ENCODE measurements at regions of chr6 and their contacts with region 1.

Region 1: GRCh38 chr6:90216072-90216977 is 80.3 kb downstream of the BACH2 start:
- DNase-seq: no peak
- H3K4me3 ChIP-seq: no peak overlapping the region
- H3K27ac ChIP-seq: no peak overlapping the region
- H3K27me3 ChIP-seq: no peaks in the 10 kb centered on the region
- CTCF ChIP-seq: no peak

Region 2: GRCh38 chr6:89797317-89797716 is 419.0 kb before region 1 on chr6:
- CTCF ChIA-PET with region 1: no interaction called
- POLR2A ChIA-PET with region 1: no interaction called
- DNase-seq: peak; percentile 27
- H3K4me3 ChIP-seq: no peak overlapping the region
- H3K27ac ChIP-seq: no peak overlapping the region
- H3K27me3 ChIP-seq: no peaks in the 10 kb centered on the region
- CTCF ChIP-seq: no peak

Region 3: GRCh38 chr6:89984926-89985750 is 231.2 kb before region 1 on chr6:
- CTCF ChIA-PET with region 1: no interaction called
- POLR2A ChIA-PET with region 1: interaction called, 47 read pairs
- DNase-seq: no peak
- H3K4me3 ChIP-seq: no peak overlapping the region
- H3K27ac ChIP-seq: peak overlapping the region; percentile 94
- H3K27me3 ChIP-seq: no peaks in the 10 kb centered on the region
- CTCF ChIP-seq: no peak

Region 4: DNA sequence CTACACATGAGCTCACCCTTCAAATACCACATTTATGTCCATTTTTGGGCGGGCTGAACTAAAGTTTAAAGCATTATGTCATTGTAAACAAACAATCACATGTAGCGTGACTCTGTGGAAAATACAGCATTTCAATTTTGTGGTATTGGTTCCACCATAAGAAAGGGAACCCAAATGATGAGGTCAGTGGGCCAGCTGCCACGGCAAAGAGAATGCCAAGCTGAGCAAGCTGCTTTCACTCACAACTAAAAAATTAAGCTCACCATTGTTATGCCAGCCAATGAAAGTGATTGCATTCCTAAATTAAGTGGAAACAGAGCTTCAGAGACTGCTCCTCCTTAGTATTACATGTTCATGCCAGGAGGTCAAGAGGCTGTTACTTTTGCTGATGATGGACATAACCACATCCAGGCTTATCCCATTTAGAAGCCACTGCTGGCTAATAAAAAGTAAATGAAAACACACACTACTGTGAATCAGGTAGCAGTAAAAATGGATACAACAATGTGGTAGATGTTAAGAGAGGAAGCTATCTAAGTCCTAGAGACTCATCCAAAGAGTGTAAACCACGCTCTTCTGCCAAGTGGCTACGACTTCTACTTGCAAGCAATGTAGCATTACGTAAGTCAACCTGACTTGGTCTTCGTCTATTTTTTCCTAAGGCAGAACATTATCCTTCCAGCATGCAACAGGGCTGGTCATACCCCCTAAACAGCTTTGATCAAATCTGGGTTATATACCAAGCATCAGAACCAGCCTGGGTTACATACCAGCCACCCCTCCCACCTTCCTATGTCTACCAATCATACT is 84.5 kb before region 1 on chr6:
- CTCF ChIA-PET with region 1: no interaction called
- POLR2A ChIA-PET with region 1: interaction called, 16 read pairs
- DNase-seq: peak; percentile 59
- H3K4me3 ChIP-seq: no peak overlapping the region
- H3K27ac ChIP-seq: no peak overlapping the region
- H3K27me3 ChIP-seq: no peaks in the 10 kb centered on the region
- CTCF ChIP-seq: no peak

Region 5: GRCh38 chr6:90184334-90185298 is 31.7 kb before region 1 on chr6:
- CTCF ChIA-PET with region 1: interaction called, 13 read pairs
- POLR2A ChIA-PET with region 1: interaction called, 3 read pairs
- DNase-seq: peak; percentile 46
- H3K4me3 ChIP-seq: no peak overlapping the region
- H3K27ac ChIP-seq: no peak overlapping the region
- H3K27me3 ChIP-seq: no peaks in the 10 kb centered on the region
- CTCF ChIP-seq: no peak

Region 6: DNA sequence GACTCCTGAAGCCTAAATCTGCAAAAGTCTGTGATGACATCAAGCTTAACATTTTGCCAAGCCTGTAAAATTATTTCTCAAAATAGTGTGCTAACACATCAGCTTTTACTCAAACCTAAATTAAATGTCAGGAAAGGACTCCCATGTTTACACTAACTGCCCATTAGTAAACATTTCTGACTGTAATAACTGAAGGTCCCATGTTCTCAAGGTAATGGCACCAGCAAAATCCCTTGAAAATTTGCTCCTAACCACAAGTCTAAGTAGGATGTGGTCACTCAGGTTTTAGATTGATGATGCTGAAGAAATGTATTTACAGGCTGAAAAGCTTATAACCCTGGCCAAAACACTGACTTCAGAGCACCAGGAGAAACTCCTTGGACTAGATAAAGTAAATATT is 47.3 kb after region 1 on chr6:
- CTCF ChIA-PET with region 1: no interaction called
- POLR2A ChIA-PET with region 1: interaction called, 28 read pairs
- DNase-seq: peak; percentile 94
- H3K4me3 ChIP-seq: no peak overlapping the region
- H3K27ac ChIP-seq: no peak overlapping the region
- H3K27me3 ChIP-seq: no peaks in the 10 kb centered on the region
- CTCF ChIP-seq: no peak

Region 7: DNA sequence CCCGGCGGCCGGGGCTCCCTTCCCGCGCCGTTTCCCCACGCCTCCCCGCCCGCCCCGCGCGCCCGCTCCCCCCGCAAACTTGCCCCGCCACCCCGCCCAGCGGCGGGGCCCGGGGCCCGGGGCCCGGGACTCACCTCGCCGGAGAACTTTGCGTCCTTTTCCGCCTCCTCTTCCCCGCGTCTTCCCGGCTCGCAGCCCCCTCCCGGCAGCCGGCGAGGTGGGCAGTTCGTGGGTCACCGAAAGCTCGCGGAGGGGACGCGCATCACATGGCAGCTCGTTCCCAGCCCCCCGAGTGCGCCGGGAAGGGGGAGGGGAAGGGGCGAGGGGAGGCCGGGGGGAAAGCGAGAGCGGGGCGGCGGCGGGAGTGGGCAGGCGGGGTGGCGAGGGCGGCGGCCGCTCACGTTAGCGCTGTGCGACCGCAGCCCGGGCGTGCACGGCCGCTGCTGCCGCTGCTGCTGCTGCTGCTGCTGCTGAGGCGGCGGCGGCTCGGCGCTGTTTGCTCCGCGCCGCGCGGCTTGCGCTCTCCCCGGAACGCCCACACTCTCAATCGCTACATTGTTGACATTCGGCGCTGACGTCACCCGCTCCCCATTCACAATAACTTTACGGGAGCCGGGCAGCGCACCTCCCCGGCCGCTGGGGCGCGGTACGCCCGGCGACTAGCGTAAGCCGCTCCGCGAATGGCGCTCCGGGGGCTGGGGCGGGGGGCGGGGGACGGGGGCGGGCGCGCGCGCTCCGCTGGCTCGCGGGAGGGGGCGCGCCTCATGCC is 80.2 kb after region 1 on chr6 and contains the start of gene BACH2:
- CTCF ChIA-PET with region 1: interaction called, 3 read pairs
- POLR2A ChIA-PET with region 1: interaction called, 17 read pairs
- DNase-seq: peak; percentile 82
- H3K4me3 ChIP-seq: peak within 1 kb of the TSS; percentile 73
- H3K27ac ChIP-seq: peak within 1 kb of the TSS; percentile 39
- H3K27me3 ChIP-seq: peaks cover 8% of the 10 kb centered on the region
- CTCF ChIP-seq: peak; percentile 24; the same call in 1 of the 2 replicates
- polyA plus RNA-seq, gene BACH2: 2.2 and 2.3 TPM in 2 replicates

Region 8: DNA sequence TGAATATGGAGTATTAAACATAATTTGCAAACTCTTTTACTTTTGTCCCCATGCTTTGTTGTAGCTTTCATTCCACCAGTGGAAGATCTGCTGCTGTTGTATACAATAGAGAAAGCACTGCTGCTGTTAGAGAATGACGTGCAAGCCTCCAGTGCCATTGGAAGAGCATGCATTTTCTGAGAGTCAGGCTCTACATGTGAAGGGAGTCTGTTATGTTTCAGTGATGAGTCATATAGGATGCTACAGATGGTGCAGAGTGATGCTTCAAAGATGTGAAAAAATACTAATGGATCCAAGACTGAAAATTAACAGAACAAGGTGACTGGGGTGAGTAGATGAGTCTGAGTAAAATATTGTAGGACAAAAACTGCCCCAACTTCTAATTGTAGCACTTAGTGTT is 102.7 kb after region 1 on chr6:
- CTCF ChIA-PET with region 1: no interaction called
- POLR2A ChIA-PET with region 1: no interaction called
- DNase-seq: peak; percentile 36
- H3K4me3 ChIP-seq: no peak overlapping the region
- H3K27ac ChIP-seq: no peak overlapping the region
- H3K27me3 ChIP-seq: peaks cover 14% of the 10 kb centered on the region
- CTCF ChIP-seq: no peak

Region 9: DNA sequence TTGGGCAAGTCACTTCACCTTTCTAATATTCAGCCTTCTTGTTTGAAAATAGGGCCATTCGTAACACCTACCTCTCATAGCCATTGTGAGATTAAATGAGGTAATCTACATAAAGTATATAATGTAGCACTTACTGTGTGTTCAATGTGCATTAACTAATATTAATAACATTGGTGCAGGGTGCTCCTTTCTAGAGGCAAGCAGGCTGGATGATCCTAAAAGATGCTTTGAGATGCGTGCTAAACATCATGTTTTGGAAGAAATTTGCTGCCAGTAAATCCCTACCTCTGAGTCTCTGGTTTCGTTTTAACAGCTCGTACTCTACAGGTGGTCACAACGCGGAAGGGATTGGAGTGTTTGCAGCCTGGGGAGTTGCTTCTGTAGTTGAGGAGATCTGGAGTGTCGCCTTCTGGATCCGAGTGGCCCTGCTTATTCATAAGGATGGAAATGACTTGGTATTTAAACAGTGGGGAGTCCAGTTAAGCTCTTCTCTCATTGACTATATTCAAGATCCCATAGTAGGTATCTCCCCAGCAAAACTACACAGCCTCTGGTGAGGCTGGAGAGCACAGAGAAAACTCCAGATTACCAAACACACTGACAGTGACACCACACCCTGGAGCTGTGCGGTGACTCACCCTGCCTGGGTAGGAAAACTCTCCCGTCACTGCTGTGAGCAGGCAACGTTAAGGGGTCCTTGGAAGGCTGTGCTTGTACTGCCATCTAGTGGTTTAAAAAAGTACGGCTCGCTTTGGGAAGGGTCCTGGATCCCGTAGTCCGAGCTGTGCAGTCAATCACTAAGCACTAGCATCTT is 262.7 kb after region 1 on chr6:
- CTCF ChIA-PET with region 1: interaction called, 4 read pairs
- POLR2A ChIA-PET with region 1: interaction called, 11 read pairs
- DNase-seq: peak; percentile 89
- H3K4me3 ChIP-seq: no peak overlapping the region
- H3K27ac ChIP-seq: no peak overlapping the region
- H3K27me3 ChIP-seq: no peaks in the 10 kb centered on the region
- CTCF ChIP-seq: peak; percentile 93

Measured in AG04450 (cell line).